Activated CD4-positive, alpha-beta memory T cell treated with anti-CD3 and anti-CD28 coated beads for 36 hours (primary cell): ENCODE measurements at regions of chr1 and their contacts with region 1.

Region 1: GRCh38 chr1:193059268-193060225 is at the starts of genes RO60 and UCHL5:
- DNase-seq: peak; percentile 98
- H3K4me3 Mint-ChIP-seq: peak within 1 kb of the TSS; percentile 92
- H3K27ac Mint-ChIP-seq: peak within 1 kb of the TSS; percentile 98
- H3K4me1 Mint-ChIP-seq: peaks cover 57% of the 10 kb centered on the region
- H3K27me3 Mint-ChIP-seq: peaks cover 1% of the 10 kb centered on the region
- total RNA-seq, gene RO60: 56.5 to 65.8 TPM
- total RNA-seq, gene UCHL5: 72.1 to 77.5 TPM

Region 2: GRCh38 chr1:192936313-192937018 is 123.1 kb before region 1 on chr1:
- CTCF ChIA-PET with region 1: no interaction called
- POLR2A ChIA-PET with region 1: interaction called, 3 read pairs
- intact Hi-C with region 1: loop called (anchors 1 kb)
- DNase-seq: no peak
- H3K4me3 Mint-ChIP-seq: no peak overlapping the region
- H3K27ac Mint-ChIP-seq: peak overlapping the region; percentile 36
- H3K4me1 Mint-ChIP-seq: peaks cover 20% of the 10 kb centered on the region
- H3K27me3 Mint-ChIP-seq: no peaks in the 10 kb centered on the region

Region 3: GRCh38 chr1:193070942-193071341 is 11.4 kb after region 1 on chr1:
- CTCF ChIA-PET with region 1: interaction called, 8 read pairs
- POLR2A ChIA-PET with region 1: interaction called, 4 read pairs
- intact Hi-C with region 1: loop called (anchors 1 kb)
- DNase-seq: peak; percentile 49
- H3K4me3 Mint-ChIP-seq: no peak overlapping the region
- H3K27ac Mint-ChIP-seq: no peak overlapping the region
- H3K4me1 Mint-ChIP-seq: peaks cover 44% of the 10 kb centered on the region
- H3K27me3 Mint-ChIP-seq: no peaks in the 10 kb centered on the region

Region 4: DNA sequence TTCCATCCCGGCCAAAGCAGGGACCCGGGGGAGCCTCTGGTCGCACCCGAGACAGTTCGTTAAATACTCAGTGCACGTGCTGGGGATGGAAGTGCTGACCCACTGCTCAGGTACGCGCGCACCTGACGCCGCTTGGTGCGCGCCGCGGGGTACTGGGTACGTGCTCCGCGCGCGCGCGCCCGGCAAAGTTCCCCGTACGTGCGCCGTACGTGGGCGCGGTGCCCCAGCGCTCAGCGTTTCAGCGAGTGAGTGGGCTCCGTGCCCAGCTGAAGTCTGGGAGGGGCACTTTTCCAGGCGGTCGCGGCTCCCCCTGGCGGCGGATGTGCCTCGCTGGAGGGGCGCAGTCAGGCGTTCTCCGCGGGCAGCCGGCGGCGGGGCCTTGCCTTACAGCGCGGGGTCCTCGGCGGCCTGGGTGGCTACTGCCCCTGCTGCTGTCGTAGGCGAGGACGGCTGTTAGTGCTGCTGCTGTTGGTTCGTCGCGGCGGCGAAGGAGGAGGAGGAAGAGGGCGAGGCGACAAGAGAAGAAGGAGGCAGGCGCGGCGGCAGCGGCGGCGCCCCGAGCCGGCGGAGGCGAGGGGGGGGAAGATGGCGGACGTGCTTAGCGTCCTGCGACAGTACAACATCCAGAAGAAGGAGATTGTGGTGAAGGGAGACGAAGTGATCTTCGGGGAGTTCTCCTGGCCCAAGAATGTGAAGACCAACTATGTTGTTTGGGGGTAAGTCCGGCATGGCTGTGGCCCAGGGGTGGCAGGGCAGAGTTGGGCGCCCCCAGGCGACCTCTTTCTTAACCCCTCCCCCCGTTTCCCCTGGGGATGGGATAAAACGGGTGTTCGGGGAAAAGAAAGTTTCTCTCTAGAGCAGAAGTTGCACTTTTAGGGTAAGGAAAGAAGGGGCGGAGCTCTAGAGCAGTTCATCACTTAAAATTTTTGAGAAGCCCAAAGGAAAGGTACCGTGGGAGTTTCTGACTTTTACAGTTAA is 62.4 kb after region 1 on chr1 and contains the start of gene CDC73:
- CTCF ChIA-PET with region 1: interaction called, 25 read pairs
- POLR2A ChIA-PET with region 1: interaction called, 25 read pairs
- intact Hi-C with region 1: loop called (anchors 1 kb)
- DNase-seq: peak; percentile 99
- H3K4me3 Mint-ChIP-seq: peak within 1 kb of the TSS; percentile 85
- H3K27ac Mint-ChIP-seq: peak within 1 kb of the TSS; percentile 98
- H3K4me1 Mint-ChIP-seq: peaks cover 45% of the 10 kb centered on the region
- H3K27me3 Mint-ChIP-seq: no peaks in the 10 kb centered on the region
- total RNA-seq, gene CDC73: 47.9 to 49.3 TPM

Region 5: DNA sequence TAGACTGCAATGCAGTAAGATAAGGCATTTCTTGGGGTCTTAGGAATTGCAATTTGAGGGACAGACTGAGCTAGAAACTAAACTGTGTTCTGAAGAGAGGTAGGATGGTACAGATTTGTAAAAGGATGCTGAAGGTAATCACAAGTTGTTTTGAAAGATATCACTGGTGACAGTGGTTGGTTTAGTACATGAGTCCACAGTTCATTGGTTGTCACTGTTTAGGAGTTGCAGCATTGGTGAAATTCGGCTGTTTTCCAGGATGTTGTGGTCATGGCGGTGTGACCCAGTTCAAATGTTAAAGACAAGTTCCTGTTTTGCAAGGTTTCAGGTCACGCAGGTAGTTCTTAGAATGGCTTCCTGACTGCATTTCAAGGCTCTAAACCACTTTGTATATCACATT is 419.6 kb after region 1 on chr1:
- CTCF ChIA-PET with region 1: no interaction called
- POLR2A ChIA-PET with region 1: no interaction called
- intact Hi-C with region 1: no loop called
- DNase-seq: peak; percentile 86
- H3K4me3 Mint-ChIP-seq: peak overlapping the region; percentile 11
- H3K27ac Mint-ChIP-seq: peak overlapping the region; percentile 81
- H3K4me1 Mint-ChIP-seq: peaks cover 53% of the 10 kb centered on the region
- H3K27me3 Mint-ChIP-seq: no peaks in the 10 kb centered on the region

Region 6: GRCh38 chr1:194289569-194290266 is 1230.2 kb after region 1 on chr1:
- CTCF ChIA-PET with region 1: no interaction called
- POLR2A ChIA-PET with region 1: no interaction called
- intact Hi-C with region 1: loop called (anchors 2 kb)
- DNase-seq: peak; percentile 64
- H3K4me3 Mint-ChIP-seq: peak overlapping the region; percentile 43
- H3K27ac Mint-ChIP-seq: no peak overlapping the region
- H3K4me1 Mint-ChIP-seq: peaks cover 33% of the 10 kb centered on the region
- H3K27me3 Mint-ChIP-seq: no peaks in the 10 kb centered on the region